Sciatic nerve (tissue), 2 donors: ENCODE measurements at regions of chr7 and their contacts with region 1.

Region 1: DNA sequence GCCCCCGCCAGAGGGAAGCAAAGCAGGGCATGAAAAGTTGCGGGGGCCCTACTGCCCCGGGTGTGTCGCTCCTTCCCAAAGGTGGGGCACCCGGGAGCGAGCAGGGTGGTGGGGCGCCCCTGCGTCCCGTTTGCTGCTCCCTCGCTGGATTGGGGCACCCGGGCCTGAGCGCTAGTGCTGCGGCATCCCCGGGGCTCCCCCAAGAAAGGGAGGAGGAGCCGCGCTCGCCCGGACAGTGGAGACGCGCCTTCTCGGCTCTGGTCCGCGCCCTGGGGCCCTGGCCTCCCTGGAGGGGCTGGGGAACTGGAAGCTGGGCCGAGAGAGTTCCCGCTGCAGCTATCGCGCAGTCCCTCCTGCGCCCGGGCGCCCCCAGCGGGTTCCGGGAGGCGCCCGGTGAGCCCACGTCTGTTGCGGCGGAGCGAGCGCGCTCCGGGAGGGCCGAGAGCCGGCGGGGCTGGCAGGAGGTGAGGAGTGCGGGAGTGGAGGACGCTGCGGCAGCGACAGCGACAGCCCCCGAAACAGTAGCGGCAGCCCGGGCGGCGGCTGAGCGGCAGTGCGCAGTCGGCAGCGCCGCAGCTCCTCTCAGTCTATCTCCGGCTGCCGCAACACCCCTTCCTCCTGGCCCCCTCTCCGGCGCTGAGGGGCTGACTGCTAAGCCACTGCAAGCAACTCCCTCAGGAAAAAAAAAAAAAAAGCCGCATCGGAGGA is 504 bp upstream of the BMPER start:
- DNase-seq: peak; percentile 73
- ATAC-seq: peak; percentile 76

Region 2: GRCh38 chr7:33764752-33765451 is 139.9 kb before region 1 on chr7:
- intact Hi-C with region 1: loop called (anchors 10 kb)
- DNase-seq: no peak
- ATAC-seq: no peak

Region 3: DNA sequence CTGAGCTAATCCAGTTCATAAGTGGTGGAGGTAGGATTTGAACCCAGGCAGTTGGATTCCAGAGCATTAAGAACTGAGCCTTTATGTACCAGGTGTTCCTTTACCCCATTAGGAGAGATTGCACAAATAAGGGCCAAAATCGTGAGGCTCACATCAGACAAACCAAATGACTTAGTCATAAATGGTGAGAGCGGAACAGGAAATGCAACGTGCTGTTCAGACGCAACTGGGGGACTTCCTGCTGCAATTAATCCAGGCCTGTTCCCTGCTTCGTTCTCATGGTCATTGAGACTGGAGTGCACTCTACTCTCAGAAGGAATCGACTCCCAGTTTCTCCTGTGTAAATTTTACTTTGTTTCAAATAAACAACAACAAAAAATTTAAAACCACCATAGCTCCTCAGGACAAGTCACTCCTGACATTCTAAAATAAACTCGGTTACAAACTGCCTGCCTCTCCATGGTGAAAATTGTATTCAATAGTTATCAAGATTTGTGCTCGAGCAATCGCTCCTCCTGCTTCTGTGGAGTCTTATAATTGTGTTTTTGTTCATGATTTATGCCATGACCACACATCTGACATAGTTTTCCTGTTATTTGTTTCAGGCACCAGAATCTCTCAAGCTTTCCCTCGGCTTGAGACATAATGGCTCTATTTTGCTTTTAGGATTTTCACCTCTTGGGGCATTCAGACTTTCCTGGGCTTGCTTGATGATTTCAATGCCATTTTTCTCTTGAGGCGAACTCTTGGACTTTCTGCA is 114.8 kb before region 1 on chr7:
- intact Hi-C with region 1: no loop called
- DNase-seq: no peak
- ATAC-seq: no peak

Region 4: GRCh38 chr7:33965183-33965744 is 60.4 kb after region 1 on chr7:
- intact Hi-C with region 1: no loop called
- DNase-seq: no peak
- ATAC-seq: peak; percentile 66

Region 5: GRCh38 chr7:34069630-34070270 is 164.9 kb after region 1 on chr7:
- intact Hi-C with region 1: no loop called
- DNase-seq: no peak
- ATAC-seq: no peak

Region 6: GRCh38 chr7:34361663-34362250 is 456.9 kb after region 1 on chr7:
- intact Hi-C with region 1: no loop called
- DNase-seq: no peak
- ATAC-seq: no peak